ENCODE measurements at regions of chr2 and their contacts with region 1.

Region 1: DNA sequence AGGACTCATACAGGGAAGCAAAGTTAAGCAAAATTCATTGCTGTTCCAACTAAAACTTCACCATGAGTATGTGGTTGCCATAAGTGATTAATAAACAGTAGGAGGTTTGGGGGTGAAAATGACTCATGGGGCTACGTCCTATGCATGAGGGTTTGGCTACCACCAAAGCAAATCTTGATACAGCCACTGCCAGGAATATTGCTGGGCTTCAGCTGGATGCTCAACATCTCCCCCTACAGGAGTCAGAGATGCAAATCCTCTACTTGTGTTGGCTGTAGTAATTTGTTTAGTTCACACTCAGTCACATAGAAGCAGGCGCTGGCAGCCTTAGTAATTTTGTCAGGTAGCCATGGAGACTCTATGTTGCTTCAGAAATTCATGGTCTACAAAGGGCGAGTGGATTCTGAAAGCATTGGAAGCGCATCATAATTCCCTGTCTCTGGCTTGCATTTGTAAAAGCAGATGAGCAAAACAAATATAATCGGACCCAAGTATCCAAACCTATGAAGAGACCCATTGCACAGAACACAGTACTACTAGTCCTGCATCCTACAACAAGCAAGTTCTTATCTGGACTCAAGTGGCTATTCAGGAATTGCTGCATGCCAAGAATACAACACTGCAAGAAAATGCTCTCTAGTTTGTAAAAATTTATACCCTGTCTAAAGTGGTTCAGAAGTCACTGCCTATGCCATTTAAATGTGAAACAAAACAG is 76.0 kb downstream of the CD28 start:
- DNase-seq: peak; percentile 92
- H3K4me3 ChIP-seq: no peak overlapping the region
- CTCF ChIP-seq: peak; percentile 82

Region 2: GRCh38 chr2:203759690-203760365 is 22.6 kb before region 1 on chr2:
- CTCF ChIA-PET with region 1: interaction called, 25 read pairs
- POLR2A ChIA-PET with region 1: interaction called, 4 read pairs
- DNase-seq: no peak
- H3K4me3 ChIP-seq: no peak overlapping the region
- CTCF ChIP-seq: no peak

Region 3: GRCh38 chr2:203797712-203798111 is 15.3 kb after region 1 on chr2:
- CTCF ChIA-PET with region 1: interaction called, 23 read pairs
- POLR2A ChIA-PET with region 1: interaction called, 4 read pairs
- DNase-seq: no peak
- H3K4me3 ChIP-seq: no peak overlapping the region
- CTCF ChIP-seq: no peak

Region 4: GRCh38 chr2:203804070-203804469 is 21.7 kb after region 1 on chr2:
- CTCF ChIA-PET with region 1: interaction called, 16 read pairs
- POLR2A ChIA-PET with region 1: interaction called, 25 read pairs
- DNase-seq: peak; percentile 98
- H3K4me3 ChIP-seq: no peak overlapping the region
- CTCF ChIP-seq: no peak